ENCODE measurements at regions of chr4 and their contacts with region 1.

Region 1: GRCh38 chr4:73341454-73341853 is 62.6 kb upstream of the ALB start:
- DNase-seq: peak; percentile 51
- H3K4me3 ChIP-seq: no peak overlapping the region
- H3K27ac ChIP-seq: no peak overlapping the region
- H3K4me1 ChIP-seq: no peaks in the 10 kb centered on the region
- H3K27me3 ChIP-seq: peaks cover 3% of the 10 kb centered on the region
- CTCF ChIP-seq: peak; percentile 67 to 87

Region 2: GRCh38 chr4:73187325-73187724 is 154.1 kb before region 1 on chr4:
- CTCF ChIA-PET with region 1: no interaction called
- dilution Hi-C with region 1: no loop called
- in situ Hi-C with region 1: no loop called
- intact Hi-C with region 1: no loop called
- DNase-seq: no peak
- H3K4me3 ChIP-seq: no peak overlapping the region
- H3K27ac ChIP-seq: no peak overlapping the region
- H3K4me1 ChIP-seq: no peaks in the 10 kb centered on the region
- H3K27me3 ChIP-seq: no peaks in the 10 kb centered on the region
- CTCF ChIP-seq: no peak

Region 3: DNA sequence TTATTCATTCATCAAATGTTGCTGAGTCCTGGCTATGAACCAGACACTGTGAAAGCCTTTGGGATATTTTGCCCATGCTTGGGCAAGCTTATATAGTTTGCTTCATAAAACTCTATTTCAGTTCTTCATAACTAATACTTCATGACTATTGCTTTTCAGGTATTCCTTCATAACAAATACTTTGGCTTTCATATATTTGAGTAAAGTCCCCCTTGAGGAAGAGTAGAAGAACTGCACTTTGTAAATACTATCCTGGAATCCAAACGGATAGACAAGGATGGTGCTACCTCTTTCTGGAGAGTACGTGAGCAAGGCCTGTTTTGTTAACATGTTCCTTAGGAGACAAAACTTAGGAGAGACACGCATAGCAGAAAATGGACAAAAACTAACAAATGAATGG is 92.9 kb after region 1 on chr4:
- CTCF ChIA-PET with region 1: no interaction called
- dilution Hi-C with region 1: no loop called
- in situ Hi-C with region 1: no loop called
- intact Hi-C with region 1: loop called (anchors 1 kb)
- DNase-seq: no peak
- H3K4me3 ChIP-seq: no peak overlapping the region
- H3K27ac ChIP-seq: no peak overlapping the region
- H3K4me1 ChIP-seq: no peaks in the 10 kb centered on the region
- H3K27me3 ChIP-seq: peaks cover 2% of the 10 kb centered on the region
- CTCF ChIP-seq: peak; percentile 57 to 69

Region 4: DNA sequence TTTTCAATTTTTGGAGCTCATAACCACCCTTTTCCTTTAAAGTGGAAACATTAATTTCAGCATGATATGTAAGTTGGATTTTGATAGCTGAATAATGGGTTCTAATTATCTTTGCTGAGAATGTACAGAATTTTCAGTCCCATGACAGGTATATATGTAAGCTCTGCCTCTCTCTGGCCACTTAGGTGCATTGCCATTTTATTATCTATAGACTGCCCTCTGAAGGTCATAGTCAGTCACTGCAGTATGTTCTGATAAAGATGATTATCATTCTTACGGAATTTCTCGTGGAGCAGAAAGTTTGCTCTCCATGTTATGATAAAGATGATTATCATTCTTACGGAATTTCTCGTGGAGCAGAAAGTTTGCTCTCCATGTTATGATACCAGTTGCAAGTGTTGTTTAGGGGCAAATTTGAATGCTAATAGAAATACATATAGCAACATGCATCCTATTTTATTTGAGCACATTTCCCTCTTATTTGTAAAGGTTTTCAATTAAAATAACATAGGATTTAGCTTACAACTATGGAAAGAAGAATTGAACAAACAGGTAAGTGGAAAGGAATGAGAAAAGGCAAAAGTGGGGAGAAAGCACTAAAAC is 105.0 kb after region 1 on chr4:
- CTCF ChIA-PET with region 1: interaction called, 15 read pairs
- dilution Hi-C with region 1: no loop called
- in situ Hi-C with region 1: loop called (anchors 10 kb)
- intact Hi-C with region 1: loop called (anchors 1 kb)
- DNase-seq: peak; percentile 43
- H3K4me3 ChIP-seq: no peak overlapping the region
- H3K27ac ChIP-seq: no peak overlapping the region
- H3K4me1 ChIP-seq: peaks cover 7% of the 10 kb centered on the region
- H3K27me3 ChIP-seq: peaks cover 2% of the 10 kb centered on the region
- CTCF ChIP-seq: peak; percentile 84 to 94

Region 5: GRCh38 chr4:73573794-73574406 is 232.4 kb after region 1 on chr4:
- CTCF ChIA-PET with region 1: no interaction called
- dilution Hi-C with region 1: no loop called
- in situ Hi-C with region 1: no loop called
- intact Hi-C with region 1: loop called (anchors 2 kb)
- DNase-seq: peak; percentile 52
- H3K4me3 ChIP-seq: no peak overlapping the region
- H3K27ac ChIP-seq: no peak overlapping the region
- H3K4me1 ChIP-seq: peaks cover 5% of the 10 kb centered on the region
- H3K27me3 ChIP-seq: no peaks in the 10 kb centered on the region
- CTCF ChIP-seq: peak; percentile 89

Region 6: GRCh38 chr4:73864365-73864764 is 522.9 kb after region 1 on chr4:
- CTCF ChIA-PET with region 1: no interaction called
- dilution Hi-C with region 1: no loop called
- in situ Hi-C with region 1: no loop called
- intact Hi-C with region 1: loop called (anchors 2 kb)
- DNase-seq: peak; percentile 59
- H3K4me3 ChIP-seq: no peak overlapping the region
- H3K27ac ChIP-seq: no peak overlapping the region
- H3K4me1 ChIP-seq: peaks cover 25% of the 10 kb centered on the region
- H3K27me3 ChIP-seq: no peaks in the 10 kb centered on the region
- CTCF ChIP-seq: peak; percentile 79 to 91

Region 7: GRCh38 chr4:73922766-73923630 is 581.5 kb after region 1 on chr4:
- CTCF ChIA-PET with region 1: no interaction called
- dilution Hi-C with region 1: no loop called
- in situ Hi-C with region 1: no loop called
- intact Hi-C with region 1: loop called (anchors 2 kb)
- DNase-seq: peak; percentile 33
- H3K4me3 ChIP-seq: no peak overlapping the region
- H3K27ac ChIP-seq: peak overlapping the region; percentile 3
- H3K4me1 ChIP-seq: peaks cover 10% of the 10 kb centered on the region
- H3K27me3 ChIP-seq: no peaks in the 10 kb centered on the region
- CTCF ChIP-seq: peak; percentile 35 to 53